ENCODE measurements at regions of chr12 and their contacts with region 1.

Region 1: DNA sequence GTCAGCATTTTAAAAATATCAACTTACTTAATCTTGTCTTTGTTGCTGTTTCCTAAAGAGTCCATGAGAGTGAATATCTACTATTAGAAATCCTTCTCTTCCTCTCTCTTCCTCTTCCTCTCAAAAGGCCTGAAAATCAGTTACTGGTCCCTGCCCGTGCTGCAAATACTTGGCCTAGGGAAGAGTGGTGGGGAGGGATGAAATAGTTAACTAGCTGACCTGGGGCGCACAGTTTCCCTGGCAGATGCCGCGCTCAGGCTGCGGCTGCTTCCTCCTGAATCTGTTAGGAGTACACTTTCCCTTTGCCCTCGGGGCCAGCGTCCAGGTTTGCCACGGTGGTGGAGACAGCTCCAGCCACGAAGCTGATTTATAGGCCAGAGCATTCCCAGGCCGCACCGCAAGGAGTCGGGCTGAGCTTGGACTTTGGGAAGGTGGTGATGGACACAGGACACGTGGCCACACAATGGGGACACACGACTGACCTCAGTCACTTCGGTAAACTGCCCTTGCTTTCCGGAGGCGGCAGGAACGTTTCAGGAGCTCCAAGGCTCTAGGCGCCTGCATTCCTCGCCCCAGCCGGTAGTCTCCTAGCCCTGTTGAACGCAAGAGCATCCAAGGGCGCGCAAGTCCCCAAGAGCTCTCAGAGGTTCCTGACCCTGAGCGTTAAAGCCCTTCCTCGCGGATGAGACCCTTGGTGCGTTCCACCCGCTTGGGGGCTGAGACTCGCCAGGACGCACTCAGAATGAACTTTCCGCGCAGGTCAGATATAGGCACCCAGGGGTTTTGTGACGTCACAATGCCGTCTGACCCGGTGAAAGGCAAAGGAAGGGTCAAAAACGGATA is 7.1 kb upstream of the ASCL1 start:
- DNase-seq: no peak
- H3K4me3 ChIP-seq: no peak overlapping the region
- H3K27ac ChIP-seq: no peak overlapping the region
- H3K4me1 ChIP-seq: no peaks in the 10 kb centered on the region
- H3K27me3 ChIP-seq: peaks cover 98% of the 10 kb centered on the region
- CTCF ChIP-seq: no peak

Region 2: GRCh38 chr12:103548622-103549601 is 598.6 kb after region 1 on chr12:
- intact Hi-C with region 1: loop called (anchors 5 kb)
- DNase-seq: peak; percentile 42
- H3K4me3 ChIP-seq: no peak overlapping the region
- H3K27ac ChIP-seq: no peak overlapping the region
- H3K4me1 ChIP-seq: no peaks in the 10 kb centered on the region
- H3K27me3 ChIP-seq: peaks cover 41% of the 10 kb centered on the region
- CTCF ChIP-seq: peak; percentile 83

Measured in left ventricle myocardium inferior (tissue), 1 donor.